CD8-positive, alpha-beta T cell (primary cell): ENCODE measurements at regions of chr22 and their contacts with region 1.

Region 1: GRCh38 chr22:37472418-37473006 is 13.7 kb downstream of the MFNG start:
- DNase-seq: peak in 8 of 9 experiments; percentile 19 to 71 (median 60)
- ATAC-seq: peak; percentile 44
- H3K4me3 ChIP-seq: no peak overlapping the region
- H3K4me3 Mint-ChIP-seq: no peak overlapping the region
- H3K27ac ChIP-seq: no peak overlapping the region
- H3K27ac Mint-ChIP-seq: peak overlapping the region; percentile 74
- H3K4me1 ChIP-seq: no peaks in the 10 kb centered on the region
- H3K4me1 Mint-ChIP-seq: peaks cover 11% of the 10 kb centered on the region
- H3K27me3 ChIP-seq: no peaks in the 10 kb centered on the region
- H3K27me3 Mint-ChIP-seq: no peaks in the 10 kb centered on the region
- CTCF ChIP-seq: peak; percentile 30

Region 2: DNA sequence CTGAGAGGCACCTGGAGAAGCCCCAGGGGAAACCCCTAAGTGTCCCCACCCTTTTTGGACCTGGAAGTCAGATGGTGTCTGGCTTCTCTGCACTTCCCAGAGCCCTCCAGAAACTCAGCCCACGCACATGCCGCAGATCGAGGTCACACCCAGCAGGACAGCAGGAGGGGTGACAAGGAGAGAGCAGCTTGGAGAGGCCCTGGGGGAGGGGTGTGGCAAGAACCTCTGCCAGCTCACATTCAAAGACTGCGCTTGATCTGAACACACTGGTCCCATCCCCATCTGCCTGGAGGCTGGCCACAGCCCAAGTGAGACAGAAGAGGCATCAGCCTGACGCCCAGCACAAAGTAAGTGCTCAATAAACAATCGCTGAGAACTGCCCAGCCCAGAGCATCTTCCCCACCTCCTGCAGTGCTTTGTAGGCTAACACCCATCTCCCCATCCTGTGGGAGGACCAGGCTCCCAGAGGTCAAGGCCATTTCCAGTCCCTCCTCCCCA is 384.4 kb before region 1 on chr22:
- CTCF ChIA-PET with region 1: no interaction called
- POLR2A ChIA-PET with region 1: no interaction called
- intact Hi-C with region 1: no loop called
- DNase-seq: peak in 1 of 9 experiments; percentile 27
- ATAC-seq: no peak
- H3K4me3 ChIP-seq: no peak overlapping the region
- H3K4me3 Mint-ChIP-seq: no peak overlapping the region
- H3K27ac ChIP-seq: no peak overlapping the region
- H3K27ac Mint-ChIP-seq: no peak overlapping the region
- H3K4me1 ChIP-seq: no peaks in the 10 kb centered on the region
- H3K4me1 Mint-ChIP-seq: peaks cover 2% of the 10 kb centered on the region
- H3K27me3 ChIP-seq: no peaks in the 10 kb centered on the region
- H3K27me3 Mint-ChIP-seq: peaks cover 2% of the 10 kb centered on the region
- CTCF ChIP-seq: no peak

Region 3: DNA sequence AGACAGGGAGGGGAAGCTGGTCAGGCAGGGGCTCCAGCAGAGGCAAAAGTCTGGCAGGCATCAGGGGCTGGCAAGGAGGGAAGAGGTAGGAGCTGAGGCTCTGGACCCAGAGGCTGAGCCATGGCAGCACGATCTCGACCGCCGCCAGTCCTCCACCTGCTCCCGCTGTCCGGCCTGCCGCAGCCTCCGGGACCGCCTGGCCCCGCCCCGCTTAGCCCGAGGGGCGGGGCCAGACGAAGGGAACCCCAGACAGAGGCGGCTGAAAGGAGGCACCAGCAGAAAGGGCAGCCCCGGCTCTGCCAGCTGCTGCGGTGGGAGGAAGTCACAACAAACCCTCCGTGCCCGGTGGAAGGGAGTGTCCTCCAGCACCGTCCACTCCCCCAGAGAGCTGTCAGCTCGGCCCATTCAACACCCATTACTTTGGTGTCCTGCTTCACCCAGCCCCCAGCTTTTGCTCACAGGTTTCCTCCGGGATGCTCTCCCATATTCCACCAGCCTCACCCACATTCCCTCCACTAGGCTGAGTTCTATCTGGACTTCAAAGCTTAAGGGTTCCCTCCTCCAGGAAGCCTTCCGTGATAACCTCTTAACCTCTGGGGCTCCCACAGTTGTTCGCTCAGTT is 13.8 kb after region 1 on chr22 and contains the start of gene MFNG:
- CTCF ChIA-PET with region 1: interaction called, 206 read pairs
- POLR2A ChIA-PET with region 1: interaction called, 24 read pairs
- intact Hi-C with region 1: no loop called
- DNase-seq: peak; percentile 35 to 87 (median 74)
- ATAC-seq: peak; percentile 59
- H3K4me3 ChIP-seq: peak within 1 kb of the TSS; percentile 73 to 96
- H3K4me3 Mint-ChIP-seq: peak within 1 kb of the TSS; percentile 94
- H3K27ac ChIP-seq: peak within 1 kb of the TSS; percentile 69 to 87
- H3K27ac Mint-ChIP-seq: peak within 1 kb of the TSS; percentile 98
- H3K4me1 ChIP-seq: peaks cover 62% of the 10 kb centered on the region
- H3K4me1 Mint-ChIP-seq: peaks cover 72% of the 10 kb centered on the region
- H3K27me3 ChIP-seq: no peaks in the 10 kb centered on the region
- H3K27me3 Mint-ChIP-seq: no peaks in the 10 kb centered on the region
- CTCF ChIP-seq: no peak
- total RNA-seq, gene MFNG: 63.2 to 63.9 TPM

Region 4: GRCh38 chr22:37492428-37493344 is 20.2 kb after region 1 on chr22:
- CTCF ChIA-PET with region 1: interaction called, 206 read pairs
- POLR2A ChIA-PET with region 1: interaction called, 7 read pairs
- intact Hi-C with region 1: no loop called
- DNase-seq: peak in 8 of 9 experiments; percentile 39 to 71 (median 62)
- ATAC-seq: peak; percentile 93
- H3K4me3 ChIP-seq: no peak overlapping the region
- H3K4me3 Mint-ChIP-seq: no peak overlapping the region
- H3K27ac ChIP-seq: no peak overlapping the region
- H3K27ac Mint-ChIP-seq: no peak overlapping the region
- H3K4me1 ChIP-seq: peaks cover 31% of the 10 kb centered on the region
- H3K4me1 Mint-ChIP-seq: peaks cover 37% of the 10 kb centered on the region
- H3K27me3 ChIP-seq: peaks cover 0 to 2% of the 10 kb centered on the region in 2 experiments
- H3K27me3 Mint-ChIP-seq: no peaks in the 10 kb centered on the region
- CTCF ChIP-seq: peak; percentile 42